Ascending aorta (tissue), 2 donors: ENCODE measurements at regions of chr4 and their contacts with region 1.

Region 1: DNA sequence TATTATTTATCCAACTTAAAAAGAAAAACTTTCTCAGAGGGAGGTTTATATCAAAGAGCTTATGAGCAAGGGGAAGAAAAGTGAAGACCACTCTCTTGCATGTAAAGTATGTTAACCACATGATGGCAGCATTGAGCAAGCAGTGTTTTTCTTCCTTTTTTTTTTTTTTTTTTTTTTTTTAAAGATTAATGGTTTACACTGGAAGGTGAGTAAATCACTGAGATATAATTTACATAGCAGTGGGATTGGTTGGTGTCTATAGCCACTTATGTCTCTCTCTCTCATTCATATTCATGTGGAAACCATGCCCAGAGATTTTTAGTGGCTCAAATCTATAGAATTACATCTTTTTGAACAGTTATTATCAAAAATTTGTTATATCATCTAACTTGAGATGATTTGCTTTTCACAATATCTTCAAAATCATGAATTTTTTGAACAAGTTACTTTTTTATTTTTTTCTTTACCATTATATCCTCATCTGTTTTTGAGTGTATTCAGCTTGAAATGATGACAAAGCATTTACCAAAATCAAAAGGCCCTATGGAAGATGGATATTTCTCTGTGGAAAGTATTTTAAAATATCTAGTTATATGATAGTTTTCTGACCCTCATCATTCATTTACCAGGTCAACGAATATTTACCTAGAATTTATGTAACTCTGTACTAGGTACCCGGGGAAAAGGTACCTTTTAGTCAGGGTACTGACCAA is 31.6 kb downstream of the MTHFD2L start:
- DNase-seq: no peak
- H3K4me3 ChIP-seq: no peak overlapping the region
- H3K27ac ChIP-seq: no peak overlapping the region
- H3K4me1 ChIP-seq: no peaks in the 10 kb centered on the region
- H3K27me3 ChIP-seq: no peaks in the 10 kb centered on the region
- CTCF ChIP-seq: peak; percentile 17 to 59 (median 43)

Region 2: DNA sequence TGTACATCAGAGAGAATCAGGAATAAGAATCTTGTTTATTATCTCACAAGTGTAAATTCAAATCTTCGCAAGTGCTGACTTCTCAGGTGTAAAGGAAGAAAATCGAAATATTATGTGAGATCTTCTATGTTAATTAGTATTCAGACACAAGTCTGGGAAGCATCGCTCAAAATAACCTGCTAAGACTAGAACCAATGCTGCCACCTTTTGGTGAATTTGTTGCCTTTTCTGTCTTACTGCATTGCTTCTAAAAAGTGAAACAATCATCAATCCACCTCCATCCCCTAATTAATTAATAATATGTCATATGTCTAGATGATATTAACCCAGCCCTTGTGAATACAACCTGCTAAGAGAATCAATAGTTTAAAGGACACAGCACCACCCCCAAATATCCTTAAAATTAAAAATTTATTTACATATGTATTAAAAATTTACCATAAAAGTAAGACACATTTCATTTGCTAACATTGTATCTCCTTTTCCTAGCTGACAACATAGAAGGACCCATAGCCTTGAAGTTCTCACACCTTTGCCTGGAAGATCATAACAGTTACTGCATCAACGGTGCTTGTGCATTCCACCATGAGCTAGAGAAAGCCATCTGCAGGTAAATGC is 122.3 kb after region 1 on chr4:
- intact Hi-C with region 1: loop called (anchors 2 kb)
- DNase-seq: no peak
- H3K4me3 ChIP-seq: no peak overlapping the region
- H3K27ac ChIP-seq: no peak overlapping the region
- H3K4me1 ChIP-seq: no peaks in the 10 kb centered on the region
- H3K27me3 ChIP-seq: no peaks in the 10 kb centered on the region
- CTCF ChIP-seq: peak in 2 of 3 experiments; percentile 39 to 50